Caco-2 (cell line): ENCODE measurements at regions of chr10 and their contacts with region 1.

Region 1: DNA sequence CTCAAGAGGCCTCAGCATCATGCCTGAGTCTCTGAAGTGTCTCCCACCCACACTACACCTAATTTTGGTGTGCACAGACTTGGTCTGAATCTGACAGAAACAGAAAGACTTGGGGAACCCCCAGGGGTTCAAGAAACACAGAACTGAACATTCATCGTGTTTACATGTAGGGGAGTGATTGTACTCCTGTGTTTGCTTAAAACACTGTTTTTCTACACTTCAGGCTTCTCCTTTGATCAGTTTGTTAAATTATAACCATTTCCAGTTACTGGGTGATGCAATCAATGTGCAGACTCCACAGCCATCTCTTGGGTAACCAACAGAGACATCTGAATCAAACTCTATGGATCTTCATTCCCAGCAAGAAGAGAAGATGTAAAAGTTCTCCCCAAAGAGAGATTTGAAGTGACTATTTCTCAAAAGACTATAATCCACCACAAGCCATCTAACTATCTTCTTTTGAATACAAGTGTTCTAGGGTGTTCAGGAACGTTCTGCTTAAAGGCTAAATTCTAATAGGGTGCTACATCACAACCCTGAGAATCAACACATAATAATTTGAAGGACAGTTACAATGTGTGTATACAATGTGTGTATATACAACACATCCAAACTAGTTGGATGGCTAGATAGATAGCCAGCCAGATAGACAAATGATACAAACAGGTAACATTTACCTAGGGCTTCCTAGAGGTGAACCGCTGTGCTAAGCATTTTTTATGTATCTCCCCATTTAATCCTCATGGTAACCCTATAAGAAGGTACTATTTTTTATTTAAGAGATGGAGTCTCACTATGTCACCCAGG is 34.2 kb downstream of the DNAJC12 start:
- DNase-seq: peak in 1 of 2 experiments; percentile 69
- H3K4me3 ChIP-seq: no peak overlapping the region
- H3K4me3 Mint-ChIP-seq: peak overlapping the region; percentile 30
- H3K27ac Mint-ChIP-seq: peak overlapping the region; percentile 89
- H3K4me1 ChIP-seq: peaks cover 23% of the 10 kb centered on the region
- H3K4me1 Mint-ChIP-seq: peaks cover 25% of the 10 kb centered on the region
- H3K27me3 ChIP-seq: no peaks in the 10 kb centered on the region
- H3K27me3 Mint-ChIP-seq: no peaks in the 10 kb centered on the region
- CTCF ChIP-seq: no peak

Region 2: DNA sequence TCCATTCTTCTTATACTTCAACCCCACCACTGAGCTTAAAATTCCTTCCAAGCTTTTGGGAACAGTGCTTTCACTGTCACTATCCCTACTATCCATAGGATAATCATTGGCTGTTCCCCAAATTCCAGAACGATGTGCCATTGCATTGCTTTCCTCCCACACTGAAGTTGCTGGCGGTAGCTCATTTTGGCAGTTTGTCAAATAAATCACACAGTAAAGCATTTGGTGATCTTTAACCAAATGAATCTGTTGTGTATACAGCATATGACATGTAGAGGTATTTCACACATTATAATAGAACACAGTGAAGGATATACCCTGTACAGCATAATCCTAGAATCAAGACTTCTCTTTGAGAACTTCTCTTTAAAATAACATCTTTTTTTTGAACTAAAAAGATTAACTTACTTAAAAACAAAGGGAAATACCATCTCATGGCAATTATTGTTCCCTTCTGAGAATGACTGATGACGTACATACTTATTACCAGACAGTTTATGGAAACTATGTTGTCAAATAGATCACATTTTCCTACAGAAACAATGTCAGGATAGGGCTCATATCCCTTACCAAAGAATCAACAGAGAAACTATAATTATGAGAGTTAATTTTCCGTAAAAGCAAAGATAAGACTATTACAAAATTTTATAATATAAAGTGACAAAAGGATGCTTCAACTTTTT is 201.4 kb before region 1 on chr10:
- CTCF ChIA-PET with region 1: no interaction called
- POLR2A ChIA-PET with region 1: no interaction called
- intact Hi-C with region 1: no loop called
- DNase-seq: no peak
- H3K4me3 ChIP-seq: no peak overlapping the region
- H3K4me3 Mint-ChIP-seq: no peak overlapping the region
- H3K27ac Mint-ChIP-seq: no peak overlapping the region
- H3K4me1 ChIP-seq: no peaks in the 10 kb centered on the region
- H3K4me1 Mint-ChIP-seq: no peaks in the 10 kb centered on the region
- H3K27me3 ChIP-seq: no peaks in the 10 kb centered on the region
- H3K27me3 Mint-ChIP-seq: peaks cover 2% of the 10 kb centered on the region
- CTCF ChIP-seq: no peak

Region 3: GRCh38 chr10:67764012-67764822 is 39.6 kb before region 1 on chr10:
- CTCF ChIA-PET with region 1: no interaction called
- POLR2A ChIA-PET with region 1: no interaction called
- intact Hi-C with region 1: loop called (anchors 1 kb)
- DNase-seq: peak; percentile 98 to 99
- H3K4me3 ChIP-seq: peak overlapping the region; percentile 81
- H3K4me3 Mint-ChIP-seq: peak overlapping the region; percentile 93
- H3K27ac Mint-ChIP-seq: peak overlapping the region; percentile 95
- H3K4me1 ChIP-seq: 0 out of 2 replicates have a peak, but pooled peaks cover 8% of the 10 kb centered on the region
- H3K4me1 Mint-ChIP-seq: peaks cover 25% of the 10 kb centered on the region
- H3K27me3 ChIP-seq: no peaks in the 10 kb centered on the region
- H3K27me3 Mint-ChIP-seq: peaks cover under 1% of the 10 kb centered on the region
- CTCF ChIP-seq: no peak

Region 4: DNA sequence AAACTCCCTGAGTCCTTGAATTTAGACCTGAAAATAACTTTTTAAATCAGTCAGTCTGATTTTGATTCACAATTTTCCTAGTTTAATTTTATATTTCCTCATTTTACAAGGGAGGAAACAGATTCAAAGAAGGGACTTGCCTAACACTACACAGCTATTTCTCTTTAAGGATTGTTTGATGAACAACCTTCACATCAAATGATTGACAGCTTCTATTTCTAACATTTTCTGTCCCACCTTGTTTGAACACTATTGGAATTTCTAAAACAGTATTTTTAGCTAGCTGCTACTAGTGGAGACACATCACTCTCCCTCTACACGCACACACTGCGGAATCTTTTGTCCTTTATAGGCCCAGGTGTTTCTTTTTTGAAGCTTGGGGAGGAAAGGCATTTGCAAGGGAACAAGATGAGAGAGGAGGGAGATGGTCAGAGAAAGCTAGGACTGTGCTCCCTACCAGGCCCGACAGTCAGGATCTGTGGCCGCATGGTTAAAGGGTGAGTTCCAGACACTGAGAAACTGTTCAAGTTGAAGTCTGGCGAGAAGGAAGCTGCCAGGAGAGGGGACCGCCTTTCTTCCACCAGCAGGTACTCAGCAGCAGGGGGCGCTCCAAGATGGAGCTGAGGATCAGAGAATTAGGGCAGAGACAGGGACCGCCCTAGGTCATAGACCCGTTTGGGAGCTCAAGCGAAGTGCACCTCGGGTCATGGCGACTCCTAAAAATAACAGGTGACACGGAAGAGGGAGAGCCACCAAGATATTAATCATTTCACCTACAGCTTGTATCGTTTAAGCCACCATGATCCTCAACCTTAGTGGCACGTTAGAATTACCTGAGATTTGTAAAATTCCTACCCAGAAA is 15.5 kb before region 1 on chr10:
- CTCF ChIA-PET with region 1: interaction called, 3 read pairs
- POLR2A ChIA-PET with region 1: no interaction called
- intact Hi-C with region 1: loop called (anchors 1 kb)
- DNase-seq: peak; percentile 61 to 69
- H3K4me3 ChIP-seq: no peak overlapping the region
- H3K4me3 Mint-ChIP-seq: no peak overlapping the region
- H3K27ac Mint-ChIP-seq: peak overlapping the region; percentile 18
- H3K4me1 ChIP-seq: no peaks in the 10 kb centered on the region
- H3K4me1 Mint-ChIP-seq: peaks cover 13% of the 10 kb centered on the region
- H3K27me3 ChIP-seq: no peaks in the 10 kb centered on the region
- H3K27me3 Mint-ChIP-seq: no peaks in the 10 kb centered on the region
- CTCF ChIP-seq: peak; percentile 57 to 80

Region 5: DNA sequence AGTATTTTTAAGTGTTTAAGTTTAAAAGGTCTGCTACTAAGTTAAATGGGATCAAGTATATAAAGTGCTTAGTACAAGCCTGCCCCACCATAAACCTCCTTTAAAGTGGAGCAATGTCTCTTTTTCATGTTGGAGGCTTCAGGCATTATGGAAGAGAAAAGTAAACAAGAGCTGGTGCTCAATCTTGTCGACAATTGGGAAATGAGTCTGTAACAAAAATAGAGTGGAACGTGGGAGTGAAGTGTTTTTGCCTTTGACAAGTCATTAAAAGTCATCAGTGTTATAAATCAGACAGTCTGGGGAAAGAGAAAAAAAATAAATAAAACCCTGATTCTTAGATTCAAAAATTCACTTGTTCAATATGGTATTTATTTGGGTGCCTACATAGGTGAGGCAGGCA is 10.5 kb before region 1 on chr10:
- CTCF ChIA-PET with region 1: interaction called, 3 read pairs
- POLR2A ChIA-PET with region 1: no interaction called
- intact Hi-C with region 1: loop called (anchors 1 kb)
- DNase-seq: no peak
- H3K4me3 ChIP-seq: no peak overlapping the region
- H3K4me3 Mint-ChIP-seq: no peak overlapping the region
- H3K27ac Mint-ChIP-seq: no peak overlapping the region
- H3K4me1 ChIP-seq: no peaks in the 10 kb centered on the region
- H3K4me1 Mint-ChIP-seq: peaks cover 15% of the 10 kb centered on the region
- H3K27me3 ChIP-seq: no peaks in the 10 kb centered on the region
- H3K27me3 Mint-ChIP-seq: no peaks in the 10 kb centered on the region
- CTCF ChIP-seq: no peak

Region 6: GRCh38 chr10:67818320-67818719 is 14.5 kb after region 1 on chr10:
- CTCF ChIA-PET with region 1: no interaction called
- POLR2A ChIA-PET with region 1: no interaction called
- intact Hi-C with region 1: loop called (anchors 1 kb)
- DNase-seq: peak in 1 of 2 experiments; percentile 67
- H3K4me3 ChIP-seq: no peak overlapping the region
- H3K4me3 Mint-ChIP-seq: no peak overlapping the region
- H3K27ac Mint-ChIP-seq: no peak overlapping the region
- H3K4me1 ChIP-seq: peaks cover 7% of the 10 kb centered on the region
- H3K4me1 Mint-ChIP-seq: peaks cover 6% of the 10 kb centered on the region
- H3K27me3 ChIP-seq: no peaks in the 10 kb centered on the region
- H3K27me3 Mint-ChIP-seq: no peaks in the 10 kb centered on the region
- CTCF ChIP-seq: no peak

Region 7: GRCh38 chr10:67849331-67850011 is 45.7 kb after region 1 on chr10:
- CTCF ChIA-PET with region 1: no interaction called
- POLR2A ChIA-PET with region 1: interaction called, 3 read pairs
- intact Hi-C with region 1: loop called (anchors 1 kb)
- DNase-seq: peak; percentile 98
- H3K4me3 ChIP-seq: peak overlapping the region; percentile 51
- H3K4me3 Mint-ChIP-seq: peak overlapping the region; percentile 94
- H3K27ac Mint-ChIP-seq: peak overlapping the region; percentile 95
- H3K4me1 ChIP-seq: no peaks in the 10 kb centered on the region
- H3K4me1 Mint-ChIP-seq: peaks cover 6% of the 10 kb centered on the region
- H3K27me3 ChIP-seq: no peaks in the 10 kb centered on the region
- H3K27me3 Mint-ChIP-seq: no peaks in the 10 kb centered on the region
- CTCF ChIP-seq: no peak

Region 8: GRCh38 chr10:67925449-67926005 is 121.7 kb after region 1 on chr10:
- CTCF ChIA-PET with region 1: no interaction called
- POLR2A ChIA-PET with region 1: no interaction called
- intact Hi-C with region 1: no loop called
- DNase-seq: no peak
- H3K4me3 ChIP-seq: no peak overlapping the region
- H3K4me3 Mint-ChIP-seq: no peak overlapping the region
- H3K27ac Mint-ChIP-seq: no peak overlapping the region
- H3K4me1 ChIP-seq: no peaks in the 10 kb centered on the region
- H3K4me1 Mint-ChIP-seq: no peaks in the 10 kb centered on the region
- H3K27me3 ChIP-seq: no peaks in the 10 kb centered on the region
- H3K27me3 Mint-ChIP-seq: no peaks in the 10 kb centered on the region
- CTCF ChIP-seq: no peak